ENCODE measurements at regions of chr18 and their contacts with region 1.

Region 1: GRCh38 chr18:3062798-3063680 is 50.1 kb upstream of the LPIN2 start:
- DNase-seq: peak; percentile 47 to 76 (median 67)
- ATAC-seq: peak; percentile 59
- H3K4me3 ChIP-seq: peak overlapping the region; percentile 55
- H3K4me3 Mint-ChIP-seq: peak overlapping the region; percentile 56 to 83 (median 77)
- H3K27ac ChIP-seq: peak overlapping the region; percentile 96
- H3K27ac Mint-ChIP-seq: peak overlapping the region; percentile 91 to 99 (median 96)
- H3K4me1 ChIP-seq: peaks cover 60 to 70% of the 10 kb centered on the region in 2 donors
- H3K4me1 Mint-ChIP-seq: peaks cover 46 to 74% (median 71%) of the 10 kb centered on the region in 7 donors
- H3K27me3 ChIP-seq: no peaks in the 10 kb centered on the region
- H3K27me3 Mint-ChIP-seq: no peaks in the 10 kb centered on the region

Region 2: DNA sequence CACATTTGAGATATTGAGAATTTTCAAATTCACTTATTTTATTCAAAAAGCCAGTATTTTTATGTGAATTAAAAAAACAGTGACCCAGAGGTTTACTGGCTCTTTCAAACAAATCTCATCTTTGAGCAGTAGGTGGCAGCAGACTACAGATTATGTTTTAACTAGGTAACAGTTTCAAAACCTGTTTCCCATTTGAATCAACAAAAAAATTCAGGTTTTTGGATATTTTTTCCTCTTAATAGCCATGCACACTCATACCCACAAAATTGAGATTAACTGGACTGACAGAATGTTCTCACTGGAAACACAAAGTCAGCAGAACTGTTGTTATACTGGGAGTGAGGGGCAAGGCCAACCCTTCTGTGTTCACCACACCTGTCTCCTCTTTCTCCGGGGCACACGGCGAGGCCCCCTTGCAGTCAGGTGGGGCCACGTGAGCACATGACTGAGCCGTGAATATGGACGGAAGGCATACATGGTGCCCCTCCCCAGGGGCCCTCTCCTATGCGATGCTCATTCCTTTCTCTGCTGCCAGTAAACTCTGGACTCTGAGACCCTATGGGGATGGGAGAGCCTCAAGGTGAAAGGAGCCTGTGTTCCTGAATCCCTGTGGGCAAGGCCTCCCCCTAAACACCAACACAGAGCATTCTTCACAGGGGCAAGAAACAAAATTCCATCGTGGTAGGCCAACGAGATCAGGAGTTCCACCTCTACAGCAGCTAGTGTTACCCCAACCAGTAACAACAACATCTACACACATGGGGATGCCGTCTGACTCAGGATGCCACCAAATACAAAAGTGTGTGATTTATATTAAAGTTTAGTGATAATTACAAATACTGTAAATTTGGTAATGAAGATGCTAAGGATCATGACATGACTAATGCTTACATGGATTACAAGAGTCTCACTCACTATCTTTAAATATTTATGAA is 130.5 kb before region 1 on chr18:
- CTCF ChIA-PET with region 1: interaction called, 13 read pairs
- POLR2A ChIA-PET with region 1: interaction called, 9 read pairs
- intact Hi-C with region 1: loop called (anchors 1 kb)
- DNase-seq: peak in 7 of 9 donors; percentile 60 to 79 (median 73)
- ATAC-seq: peak; percentile 84
- H3K4me3 ChIP-seq: no peak overlapping the region
- H3K4me3 Mint-ChIP-seq: peak overlapping the region in 8 of 10 donors; percentile 1 to 30 (median 10)
- H3K27ac ChIP-seq: peak overlapping the region; percentile 49
- H3K27ac Mint-ChIP-seq: peak overlapping the region; percentile 68 to 95 (median 89)
- H3K4me1 ChIP-seq: peaks cover 7 to 8% of the 10 kb centered on the region in 2 donors
- H3K4me1 Mint-ChIP-seq: peaks cover 14 to 49% (median 33%) of the 10 kb centered on the region in 7 donors
- H3K27me3 ChIP-seq: no peaks in the 10 kb centered on the region
- H3K27me3 Mint-ChIP-seq: no peaks in the 10 kb centered on the region

Region 3: DNA sequence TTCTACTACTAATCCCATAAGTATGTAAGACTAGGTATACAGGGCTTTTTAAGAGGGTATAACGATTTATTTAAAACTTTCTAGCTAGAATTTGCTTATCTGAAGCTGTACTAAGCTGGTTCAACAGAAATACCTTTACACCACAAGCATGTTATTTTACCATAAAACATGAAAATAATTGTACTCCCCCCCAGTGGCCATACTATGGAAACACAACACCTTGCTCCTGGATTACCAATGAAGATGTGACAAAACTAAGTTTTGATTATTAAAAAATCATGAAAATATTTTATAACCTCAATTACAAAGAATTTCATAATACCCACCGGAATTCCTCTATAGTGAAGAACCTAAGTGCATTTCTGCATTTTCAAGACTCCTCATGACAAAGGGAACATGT is 77.4 kb before region 1 on chr18:
- CTCF ChIA-PET with region 1: interaction called, 41 read pairs
- POLR2A ChIA-PET with region 1: interaction called, 29 read pairs
- intact Hi-C with region 1: no loop called
- DNase-seq: peak in 7 of 9 donors; percentile 56 to 75 (median 66)
- ATAC-seq: peak; percentile 79
- H3K4me3 ChIP-seq: no peak overlapping the region
- H3K4me3 Mint-ChIP-seq: peak overlapping the region in 1 of 10 donors; percentile 27
- H3K27ac ChIP-seq: no peak overlapping the region
- H3K27ac Mint-ChIP-seq: peak overlapping the region in 7 of 9 donors; percentile 0 to 98 (median 67)
- H3K4me1 ChIP-seq: peaks cover 19 to 41% of the 10 kb centered on the region in 2 donors
- H3K4me1 Mint-ChIP-seq: peaks cover 34 to 80% (median 73%) of the 10 kb centered on the region in 7 donors
- H3K27me3 ChIP-seq: no peaks in the 10 kb centered on the region
- H3K27me3 Mint-ChIP-seq: no peaks in the 10 kb centered on the region

Region 4: GRCh38 chr18:3051718-3052410 is 11.2 kb before region 1 on chr18:
- CTCF ChIA-PET with region 1: interaction called, 4 read pairs
- POLR2A ChIA-PET with region 1: interaction called, 10 read pairs
- intact Hi-C with region 1: loop called in 1 of 2 experiments (anchors 1 kb)
- DNase-seq: no peak
- ATAC-seq: peak; percentile 38
- H3K4me3 ChIP-seq: peak overlapping the region; percentile 10
- H3K4me3 Mint-ChIP-seq: peak overlapping the region in 9 of 10 donors; percentile 0 to 76 (median 42)
- H3K27ac ChIP-seq: no peak overlapping the region
- H3K27ac Mint-ChIP-seq: peak overlapping the region; percentile 3 to 75 (median 51)
- H3K4me1 ChIP-seq: peaks cover 5 to 26% of the 10 kb centered on the region in 2 donors
- H3K4me1 Mint-ChIP-seq: peaks cover 27 to 46% (median 40%) of the 10 kb centered on the region in 7 donors
- H3K27me3 ChIP-seq: no peaks in the 10 kb centered on the region
- H3K27me3 Mint-ChIP-seq: no peaks in the 10 kb centered on the region

Region 5: GRCh38 chr18:3093624-3094337 is 30.7 kb after region 1 on chr18:
- CTCF ChIA-PET with region 1: interaction called, 11 read pairs
- POLR2A ChIA-PET with region 1: interaction called, 12 read pairs
- intact Hi-C with region 1: loop called in 1 of 2 experiments (anchors 1 kb)
- DNase-seq: no peak
- ATAC-seq: no peak
- H3K4me3 ChIP-seq: no peak overlapping the region
- H3K4me3 Mint-ChIP-seq: no peak overlapping the region
- H3K27ac ChIP-seq: no peak overlapping the region
- H3K27ac Mint-ChIP-seq: peak overlapping the region in 3 of 9 donors; percentile 14 to 80 (median 14)
- H3K4me1 ChIP-seq: peaks cover 13 to 21% of the 10 kb centered on the region in 2 donors
- H3K4me1 Mint-ChIP-seq: peaks cover 17 to 36% (median 28%) of the 10 kb centered on the region in 7 donors
- H3K27me3 ChIP-seq: no peaks in the 10 kb centered on the region
- H3K27me3 Mint-ChIP-seq: no peaks in the 10 kb centered on the region

Region 6: GRCh38 chr18:3447895-3448837 is 385.1 kb after region 1 on chr18:
- CTCF ChIA-PET with region 1: no interaction called
- POLR2A ChIA-PET with region 1: interaction called, 18 read pairs
- intact Hi-C with region 1: loop called (anchors 1 to 2 kb)
- DNase-seq: peak; percentile 73 to 89 (median 84)
- ATAC-seq: peak; percentile 73
- H3K4me3 ChIP-seq: peak overlapping the region; percentile 78
- H3K4me3 Mint-ChIP-seq: peak overlapping the region; percentile 85 to 97 (median 96)
- H3K27ac ChIP-seq: peak overlapping the region; percentile 96
- H3K27ac Mint-ChIP-seq: peak overlapping the region; percentile 96 to 100 (median 99)
- H3K4me1 ChIP-seq: peaks cover 13% of the 10 kb centered on the region in 2 donors
- H3K4me1 Mint-ChIP-seq: peaks cover 5 to 35% (median 23%) of the 10 kb centered on the region in 7 donors
- H3K27me3 ChIP-seq: no peaks in the 10 kb centered on the region
- H3K27me3 Mint-ChIP-seq: peaks cover 0 to 1% (median 0%) of the 10 kb centered on the region in 5 donors